PC-9 (cell line): ENCODE measurements at regions of chr6 and their contacts with region 1.

Region 1: GRCh38 chr6:11770546-11771466 is 7.8 kb downstream of the ADTRP start:
- DNase-seq: peak; percentile 81 to 100
- H3K4me3 ChIP-seq: peak overlapping the region; percentile 52
- H3K27ac ChIP-seq: peak overlapping the region; percentile 98
- H3K4me1 ChIP-seq: peaks cover 83% of the 10 kb centered on the region
- H3K27me3 ChIP-seq: no peaks in the 10 kb centered on the region
- CTCF ChIP-seq: no peak

Region 2: GRCh38 chr6:11585426-11586016 is 185.3 kb before region 1 on chr6:
- CTCF ChIA-PET with region 1: no interaction called
- POLR2A ChIA-PET with region 1: no interaction called
- intact Hi-C with region 1: loop called (anchors 5 kb)
- DNase-seq: peak; percentile 18 to 59
- H3K4me3 ChIP-seq: no peak overlapping the region
- H3K27ac ChIP-seq: no peak overlapping the region
- H3K4me1 ChIP-seq: peaks cover 14% of the 10 kb centered on the region
- H3K27me3 ChIP-seq: no peaks in the 10 kb centered on the region
- CTCF ChIP-seq: peak; percentile 95

Region 3: DNA sequence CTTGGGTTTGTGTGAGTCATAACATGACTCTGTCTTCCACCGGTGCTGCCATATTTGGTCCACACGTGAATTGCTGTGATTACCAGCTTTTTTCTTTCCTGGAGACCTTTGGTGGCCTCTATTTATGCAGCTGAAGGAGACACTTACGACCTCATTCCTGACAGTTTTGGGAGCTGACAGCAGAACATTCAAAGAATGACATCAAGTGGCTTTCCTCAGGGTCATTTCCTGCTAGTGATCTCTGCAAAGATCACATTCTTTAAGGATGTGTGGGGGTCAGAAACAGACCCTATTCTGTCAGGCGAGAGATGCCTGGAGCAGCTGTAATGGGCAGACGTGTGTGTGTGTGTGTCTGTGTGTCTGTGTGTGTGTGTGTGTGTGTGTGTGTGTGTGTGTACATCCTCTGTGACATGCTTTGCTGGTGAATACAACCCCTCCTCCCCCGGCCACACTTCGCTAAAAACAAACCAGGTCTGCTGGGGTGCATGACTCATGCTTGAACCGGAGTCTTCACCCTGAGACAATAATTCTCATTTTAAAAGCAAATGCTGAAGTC is 117.7 kb before region 1 on chr6:
- CTCF ChIA-PET with region 1: no interaction called
- POLR2A ChIA-PET with region 1: no interaction called
- intact Hi-C with region 1: loop called (anchors 2 kb)
- DNase-seq: peak; percentile 55 to 69
- H3K4me3 ChIP-seq: no peak overlapping the region
- H3K27ac ChIP-seq: peak overlapping the region; percentile 15; the same call in 1 of the 2 replicates
- H3K4me1 ChIP-seq: peaks cover 48% of the 10 kb centered on the region
- H3K27me3 ChIP-seq: no peaks in the 10 kb centered on the region
- CTCF ChIP-seq: no peak

Region 4: DNA sequence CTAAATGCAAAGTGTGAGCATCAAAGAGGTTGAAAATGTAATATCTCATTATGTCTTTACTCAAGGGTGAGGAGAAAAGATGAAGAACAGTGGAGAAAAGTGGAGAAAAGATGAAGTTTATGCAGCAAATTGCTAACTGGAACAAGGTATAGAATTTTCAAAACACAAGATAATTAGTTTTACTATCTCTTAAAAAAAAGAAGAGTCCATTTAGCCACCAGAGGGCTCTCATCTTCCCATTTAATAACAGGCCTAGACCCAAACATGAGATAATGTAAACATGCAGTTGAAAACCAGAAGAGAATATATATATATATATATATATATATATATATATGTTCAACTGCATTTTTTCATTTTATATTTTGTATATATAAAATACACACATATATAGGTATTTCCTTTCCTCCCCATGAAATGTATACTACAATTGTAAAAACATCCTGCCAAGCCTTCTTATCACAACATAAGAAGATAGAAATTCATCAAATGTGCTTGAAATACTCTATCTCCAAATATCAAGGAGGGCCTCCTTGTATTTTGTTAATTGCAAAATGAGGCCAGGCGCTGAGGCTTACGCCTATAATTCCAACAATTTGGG is 70.6 kb before region 1 on chr6:
- CTCF ChIA-PET with region 1: no interaction called
- POLR2A ChIA-PET with region 1: interaction called, 9 read pairs
- intact Hi-C with region 1: loop called (anchors 5 kb)
- DNase-seq: peak in 1 of 2 experiments; percentile 59
- H3K4me3 ChIP-seq: no peak overlapping the region
- H3K27ac ChIP-seq: no peak overlapping the region
- H3K4me1 ChIP-seq: no peaks in the 10 kb centered on the region
- H3K27me3 ChIP-seq: no peaks in the 10 kb centered on the region
- CTCF ChIP-seq: peak; percentile 73

Region 5: GRCh38 chr6:11869672-11870340 is 99.0 kb after region 1 on chr6:
- CTCF ChIA-PET with region 1: no interaction called
- POLR2A ChIA-PET with region 1: interaction called, 3 read pairs
- intact Hi-C with region 1: loop called (anchors 2 kb)
- DNase-seq: peak in 1 of 2 experiments; percentile 34
- H3K4me3 ChIP-seq: no peak overlapping the region
- H3K27ac ChIP-seq: no peak overlapping the region
- H3K4me1 ChIP-seq: 0 out of 2 replicates have a peak, but pooled peaks cover 9% of the 10 kb centered on the region
- H3K27me3 ChIP-seq: no peaks in the 10 kb centered on the region
- CTCF ChIP-seq: no peak

Region 6: DNA sequence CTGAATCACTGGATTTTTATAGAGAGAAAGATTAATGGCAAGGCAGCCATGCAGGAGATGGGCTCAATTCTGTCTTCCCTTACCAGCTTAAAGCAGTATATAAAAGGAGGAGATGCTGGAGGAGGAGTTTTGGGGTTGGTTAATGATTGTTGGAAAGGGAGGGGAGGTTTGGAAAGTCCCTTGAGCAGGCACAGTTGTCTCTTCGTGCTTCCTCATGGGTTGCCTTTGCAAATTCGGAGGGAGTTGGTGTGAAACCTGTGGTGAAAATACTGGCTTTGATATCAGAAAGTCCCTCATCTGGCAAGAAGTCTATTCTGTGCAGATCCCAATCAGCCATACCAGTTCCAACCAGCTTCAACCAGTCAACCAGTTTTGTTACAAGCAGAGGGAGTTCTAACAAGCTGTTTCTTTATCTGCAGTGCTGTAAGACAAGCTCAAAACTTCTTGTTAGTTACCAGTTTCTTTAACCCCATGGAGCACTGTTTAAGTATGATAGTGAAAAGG is 348.3 kb after region 1 on chr6:
- CTCF ChIA-PET with region 1: no interaction called
- POLR2A ChIA-PET with region 1: no interaction called
- intact Hi-C with region 1: no loop called
- DNase-seq: no peak
- H3K4me3 ChIP-seq: no peak overlapping the region
- H3K27ac ChIP-seq: no peak overlapping the region
- H3K4me1 ChIP-seq: no peaks in the 10 kb centered on the region
- H3K27me3 ChIP-seq: no peaks in the 10 kb centered on the region
- CTCF ChIP-seq: no peak

Region 7: GRCh38 chr6:12150812-12151432 is 380.1 kb after region 1 on chr6:
- CTCF ChIA-PET with region 1: no interaction called
- POLR2A ChIA-PET with region 1: no interaction called
- intact Hi-C with region 1: loop called (anchors 10 kb)
- DNase-seq: peak in 1 of 2 experiments; percentile 47
- H3K4me3 ChIP-seq: no peak overlapping the region
- H3K27ac ChIP-seq: no peak overlapping the region; the same call in 1 of the 2 replicates
- H3K4me1 ChIP-seq: peaks cover 30% of the 10 kb centered on the region
- H3K27me3 ChIP-seq: no peaks in the 10 kb centered on the region
- CTCF ChIP-seq: peak; percentile 81

Region 8: DNA sequence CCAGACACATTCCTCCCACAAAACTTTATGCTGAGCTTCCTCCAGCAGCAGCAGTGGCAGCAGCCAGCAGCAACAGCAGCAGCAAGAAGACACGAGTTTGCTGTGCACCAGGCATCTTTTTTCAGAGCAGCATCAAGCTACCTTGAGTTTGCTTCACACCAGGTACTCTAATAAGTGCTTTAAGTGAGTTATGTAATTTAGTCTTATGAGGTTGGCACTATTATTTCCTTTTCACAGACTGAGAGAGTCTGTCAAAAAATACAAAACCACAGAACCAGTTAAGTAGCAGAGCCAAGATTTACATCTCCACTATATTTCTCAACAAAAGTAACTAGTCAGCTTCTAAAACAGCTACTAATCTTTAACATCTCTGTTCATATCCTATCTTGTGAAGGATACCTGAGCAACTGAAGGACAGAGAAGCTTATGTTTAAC is 1917.1 kb after region 1 on chr6:
- CTCF ChIA-PET with region 1: no interaction called
- POLR2A ChIA-PET with region 1: interaction called, 13 read pairs
- intact Hi-C with region 1: no loop called
- DNase-seq: no peak
- H3K4me3 ChIP-seq: no peak overlapping the region
- H3K27ac ChIP-seq: peak overlapping the region; percentile 38
- H3K4me1 ChIP-seq: no peaks in the 10 kb centered on the region
- H3K27me3 ChIP-seq: no peaks in the 10 kb centered on the region
- CTCF ChIP-seq: no peak